ENCODE measurements at regions of chr20 and their contacts with region 1.

Region 1: GRCh38 chr20:35619196-35620095 is 3.8 kb downstream of the SPAG4 start:
- DNase-seq: peak; percentile 88
- H3K4me3 ChIP-seq: peak overlapping the region in 2 of 3 experiments; percentile 36 to 54
- H3K27ac ChIP-seq: no peak overlapping the region
- H3K4me1 ChIP-seq: peaks cover 25% of the 10 kb centered on the region
- H3K27me3 ChIP-seq: no peaks in the 10 kb centered on the region
- CTCF ChIP-seq: peak; percentile 58 to 65
- POLR2A ChIP-seq: peak; percentile 59

Region 2: GRCh38 chr20:35463455-35464300 is 155.8 kb before region 1 on chr20:
- CTCF ChIA-PET with region 1: interaction called, 3 read pairs
- POLR2A ChIA-PET with region 1: no interaction called
- dilution Hi-C with region 1: no loop called
- intact Hi-C with region 1: loop called (anchors 1 kb)
- DNase-seq: peak; percentile 79
- H3K4me3 ChIP-seq: no peak overlapping the region
- H3K27ac ChIP-seq: no peak overlapping the region
- H3K4me1 ChIP-seq: peaks cover 32% of the 10 kb centered on the region
- H3K27me3 ChIP-seq: no peaks in the 10 kb centered on the region
- CTCF ChIP-seq: peak; percentile 70 to 76
- POLR2A ChIP-seq: no peak

Region 3: DNA sequence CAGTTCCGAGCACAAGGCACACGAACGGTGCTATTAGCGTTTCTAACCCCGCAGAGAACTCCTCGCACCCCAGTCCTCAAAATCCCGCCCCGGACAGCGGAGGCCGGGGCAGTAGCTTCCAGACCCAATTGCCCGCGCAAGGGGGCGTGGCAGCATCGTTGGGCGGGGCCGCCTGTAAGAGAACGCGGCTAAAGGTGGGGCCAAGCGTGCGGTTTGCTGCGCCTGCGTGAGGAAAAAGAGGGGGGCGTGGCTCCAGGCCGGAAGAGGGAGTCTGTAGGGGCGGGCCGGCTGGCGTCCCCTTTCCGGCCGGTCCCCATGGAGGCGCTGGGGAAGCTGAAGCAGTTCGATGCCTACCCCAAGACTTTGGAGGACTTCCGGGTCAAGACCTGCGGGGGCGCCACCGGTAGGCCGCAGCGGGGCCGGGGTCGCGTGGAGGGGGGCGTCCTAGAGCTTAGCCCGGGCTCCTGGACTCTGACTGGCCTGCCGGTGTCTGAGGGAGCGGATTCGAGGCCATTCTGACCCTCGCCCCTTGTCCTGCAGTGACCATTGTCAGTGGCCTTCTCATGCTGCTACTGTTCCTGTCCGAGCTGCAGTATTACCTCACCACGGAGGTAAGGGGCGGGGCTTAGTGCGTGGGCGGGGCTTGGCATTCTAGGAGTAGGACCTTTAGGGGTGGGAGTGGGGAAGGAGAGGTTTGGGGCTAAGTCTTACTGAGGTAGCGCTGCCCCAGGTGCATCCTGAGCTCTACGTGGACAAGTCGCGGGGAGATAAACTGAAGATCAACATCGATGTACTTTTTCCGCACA is 77.5 kb before region 1 on chr20 and contains the start of gene ERGIC3:
- CTCF ChIA-PET with region 1: interaction called, 5 read pairs
- POLR2A ChIA-PET with region 1: no interaction called
- dilution Hi-C with region 1: no loop called
- intact Hi-C with region 1: loop called (anchors 5 kb)
- DNase-seq: peak; percentile 96
- H3K4me3 ChIP-seq: peak within 1 kb of the TSS; percentile 58 to 71 (median 69)
- H3K27ac ChIP-seq: peak within 1 kb of the TSS; percentile 62
- H3K4me1 ChIP-seq: peaks cover 4% of the 10 kb centered on the region
- H3K27me3 ChIP-seq: no peaks in the 10 kb centered on the region
- CTCF ChIP-seq: no peak
- POLR2A ChIP-seq: peak; percentile 78
- total RNA-seq, gene ERGIC3: 202 and 203 TPM in 2 replicates

Region 4: DNA sequence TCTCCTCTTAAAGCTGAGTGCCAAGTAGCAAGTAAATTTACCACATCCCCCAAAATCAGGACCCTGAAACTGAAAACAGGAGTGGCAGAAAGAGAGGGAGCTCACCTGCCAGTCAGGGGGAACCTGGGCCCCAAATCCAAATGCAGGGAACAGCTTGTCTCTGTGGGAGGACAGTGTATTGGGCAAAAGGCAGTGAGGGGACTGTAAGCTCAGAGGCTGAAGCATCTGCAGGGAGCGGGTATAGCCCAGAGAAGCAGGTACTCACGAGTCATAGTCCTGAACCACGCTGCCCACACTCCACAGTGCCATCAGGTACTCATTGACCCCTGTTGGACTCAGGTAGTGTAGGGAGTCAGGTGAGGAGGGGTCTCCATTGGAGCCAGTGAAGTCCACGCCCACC is 11.2 kb after region 1 on chr20:
- CTCF ChIA-PET with region 1: interaction called, 11 read pairs
- POLR2A ChIA-PET with region 1: no interaction called
- dilution Hi-C with region 1: no loop called
- intact Hi-C with region 1: no loop called
- DNase-seq: no peak
- H3K4me3 ChIP-seq: no peak overlapping the region
- H3K27ac ChIP-seq: no peak overlapping the region
- H3K4me1 ChIP-seq: no peaks in the 10 kb centered on the region
- H3K27me3 ChIP-seq: no peaks in the 10 kb centered on the region
- CTCF ChIP-seq: no peak
- POLR2A ChIP-seq: no peak

Region 5: GRCh38 chr20:35699127-35699975 is 79.9 kb after region 1 on chr20 and contains the starts of genes NFS1 and ROMO1:
- CTCF ChIA-PET with region 1: no interaction called
- POLR2A ChIA-PET with region 1: no interaction called
- dilution Hi-C with region 1: no loop called
- intact Hi-C with region 1: loop called (anchors 1 kb)
- DNase-seq: peak; percentile 89
- H3K4me3 ChIP-seq: peak within 1 kb of the TSS; percentile 44 to 91 (median 87)
- H3K27ac ChIP-seq: peak within 1 kb of the TSS; percentile 65
- H3K4me1 ChIP-seq: peaks cover 17% of the 10 kb centered on the region
- H3K27me3 ChIP-seq: no peaks in the 10 kb centered on the region
- CTCF ChIP-seq: peak; percentile 14 to 43
- POLR2A ChIP-seq: peak; percentile 95
- total RNA-seq, gene NFS1: 24.0 and 25.1 TPM in 2 replicates
- total RNA-seq, gene ROMO1: 169 and 174 TPM in 2 replicates

Region 6: DNA sequence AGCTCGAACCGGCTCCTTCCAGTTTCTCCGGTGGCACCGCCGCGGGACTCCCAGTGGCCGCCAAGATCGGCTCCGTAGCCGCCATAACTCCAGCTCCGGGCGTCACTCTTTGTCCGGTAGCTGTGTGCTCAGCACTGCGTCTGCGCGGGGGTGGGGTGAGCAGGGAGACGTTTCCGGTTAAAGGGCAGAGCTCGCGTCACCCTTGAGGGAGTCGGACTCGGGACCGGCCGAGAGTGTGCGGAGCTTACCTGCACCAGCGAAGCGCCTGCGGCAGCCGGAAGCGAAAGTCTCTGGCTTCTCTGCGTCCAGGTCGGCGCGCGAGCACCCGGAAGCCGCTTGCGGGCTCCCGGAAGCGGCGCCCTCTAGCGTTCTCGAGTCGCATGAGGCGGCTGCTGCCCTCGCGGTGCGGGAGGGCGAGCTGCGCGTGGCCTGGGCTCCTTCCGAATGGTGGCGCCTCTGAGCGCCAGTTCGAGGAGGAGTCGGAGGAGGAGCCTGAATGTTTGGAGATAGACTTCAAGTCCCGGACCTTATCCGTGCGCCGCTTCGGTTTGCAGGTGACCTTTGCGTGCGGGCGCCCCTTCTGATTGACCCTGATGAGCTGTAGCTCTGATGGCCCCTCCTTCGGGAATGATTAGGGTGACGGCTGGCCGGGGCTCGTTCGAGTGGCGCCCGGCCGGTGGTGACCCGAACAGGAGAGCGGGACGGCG is 334.9 kb after region 1 on chr20 and contains the start of gene SCAND1:
- CTCF ChIA-PET with region 1: interaction called, 3 read pairs
- POLR2A ChIA-PET with region 1: no interaction called
- dilution Hi-C with region 1: no loop called
- intact Hi-C with region 1: loop called (anchors 5 kb)
- DNase-seq: peak; percentile 98
- H3K4me3 ChIP-seq: peak within 1 kb of the TSS; percentile 39 to 93 (median 82)
- H3K27ac ChIP-seq: peak within 1 kb of the TSS; percentile 94
- H3K4me1 ChIP-seq: peaks cover 17% of the 10 kb centered on the region
- H3K27me3 ChIP-seq: no peaks in the 10 kb centered on the region
- CTCF ChIP-seq: peak; percentile 99
- POLR2A ChIP-seq: peak; percentile 79
- total RNA-seq, gene SCAND1: 83.1 and 83.5 TPM in 2 replicates